Activated CD4-positive, alpha-beta T cell treated with anti-CD3 and anti-CD28 coated beads for 36 hours (primary cell): ENCODE measurements at regions of chr7 and their contacts with region 1.

Region 1: DNA sequence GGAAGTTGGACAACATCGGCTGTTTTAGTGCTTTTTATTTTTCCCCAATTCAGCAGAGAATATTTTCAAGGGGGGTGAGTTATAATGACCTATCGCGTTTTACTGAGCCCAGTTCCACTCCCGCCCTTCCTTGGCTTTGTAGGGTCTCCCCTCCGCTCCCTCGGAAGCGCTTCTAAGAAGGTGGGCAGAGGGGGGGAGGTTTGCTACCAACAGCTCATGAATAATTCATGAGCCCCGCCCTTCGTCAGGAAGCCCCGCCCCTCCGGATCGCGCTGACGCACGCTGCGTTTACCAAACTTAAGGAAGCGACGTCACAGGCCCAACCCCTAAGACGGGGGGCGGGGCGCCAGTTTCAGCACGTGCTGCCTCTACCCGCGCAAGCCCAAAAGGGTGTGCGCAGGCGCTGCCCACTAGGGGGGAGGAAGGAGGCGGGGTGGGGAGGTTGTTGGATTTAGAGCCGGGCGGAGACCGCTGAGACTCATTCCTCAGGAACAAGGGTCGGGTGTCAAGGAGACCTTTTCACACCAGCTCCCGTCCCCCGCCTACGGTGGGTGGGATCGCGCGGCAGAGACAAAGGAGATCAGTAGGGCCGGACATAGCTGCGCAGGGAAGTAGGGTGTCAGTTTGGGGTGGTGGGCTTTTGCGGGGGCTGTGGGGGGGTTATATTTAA is 529 bp upstream of the MEPCE start:
- DNase-seq: peak; percentile 100
- ATAC-seq: peak; percentile 70
- H3K4me3 Mint-ChIP-seq: peak overlapping the region; percentile 88
- H3K27ac Mint-ChIP-seq: peak overlapping the region; percentile 100
- H3K4me1 Mint-ChIP-seq: peaks cover 43% of the 10 kb centered on the region
- H3K27me3 Mint-ChIP-seq: no peaks in the 10 kb centered on the region

Region 2: GRCh38 chr7:99918959-99919813 is 509.9 kb before region 1 on chr7 and contains the start of gene TRIM4:
- CTCF ChIA-PET with region 1: no interaction called
- POLR2A ChIA-PET with region 1: no interaction called
- intact Hi-C with region 1: loop called in 1 of 2 experiments (anchors 1 kb)
- DNase-seq: peak; percentile 96
- ATAC-seq: peak; percentile 99
- H3K4me3 Mint-ChIP-seq: peak within 1 kb of the TSS; percentile 92
- H3K27ac Mint-ChIP-seq: peak within 1 kb of the TSS; percentile 95
- H3K4me1 Mint-ChIP-seq: peaks cover 33% of the 10 kb centered on the region
- H3K27me3 Mint-ChIP-seq: no peaks in the 10 kb centered on the region
- total RNA-seq, gene TRIM4: 23.9 to 25.7 TPM

Region 3: DNA sequence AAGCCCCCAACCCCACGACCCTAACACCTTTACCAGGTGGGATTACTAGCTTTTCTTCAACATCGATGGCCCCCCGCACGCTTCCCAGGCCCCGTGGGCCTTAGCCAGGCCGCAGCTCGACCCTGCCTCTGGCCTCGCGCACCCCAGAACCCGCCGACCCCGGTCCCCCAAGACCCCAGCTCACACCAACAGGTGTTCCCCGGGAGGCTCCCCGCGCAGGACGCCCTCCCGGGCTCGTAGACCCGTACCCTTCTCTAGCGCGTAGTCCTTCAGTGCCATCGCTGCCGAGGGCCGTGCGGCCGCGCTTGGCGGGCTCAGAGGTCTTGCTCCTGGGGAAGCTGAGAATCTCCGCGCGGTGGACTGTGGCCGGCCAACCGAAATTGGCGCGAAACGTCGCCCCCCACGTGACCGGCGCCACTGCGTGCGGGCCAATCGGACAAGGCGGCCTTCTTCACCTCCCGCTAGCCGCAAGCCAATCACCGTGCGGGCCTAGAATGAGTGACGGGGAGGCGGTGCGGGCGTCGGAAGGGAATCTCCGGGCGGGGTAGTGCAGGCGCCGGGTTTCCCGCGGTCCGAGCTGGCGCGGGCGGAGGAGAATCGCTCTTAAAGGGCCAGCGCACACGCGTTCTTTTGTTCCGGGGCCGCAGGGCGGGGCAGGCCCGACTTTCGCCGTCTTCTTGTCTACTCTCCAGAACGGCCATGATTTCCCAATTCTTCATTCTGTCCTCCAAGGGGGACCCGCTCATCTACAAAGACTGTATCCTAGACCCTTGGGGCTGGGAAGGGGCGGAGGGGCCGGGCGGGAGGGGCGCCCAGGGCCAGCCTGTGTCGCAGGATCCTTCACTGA is 327.9 kb before region 1 on chr7 and contains the starts of genes AP4M1 and MCM7:
- CTCF ChIA-PET with region 1: interaction called, 3 read pairs
- POLR2A ChIA-PET with region 1: interaction called, 8 read pairs
- intact Hi-C with region 1: loop called in 1 of 2 experiments (anchors 1 kb)
- DNase-seq: peak; percentile 99
- ATAC-seq: peak; percentile 91
- H3K4me3 Mint-ChIP-seq: peak within 1 kb of the TSS; percentile 90
- H3K27ac Mint-ChIP-seq: peak within 1 kb of the TSS; percentile 94
- H3K4me1 Mint-ChIP-seq: peaks cover 41% of the 10 kb centered on the region
- H3K27me3 Mint-ChIP-seq: no peaks in the 10 kb centered on the region
- total RNA-seq, gene AP4M1: 8.8 to 10.4 TPM
- total RNA-seq, gene MCM7: 411 to 429 TPM

Region 4: DNA sequence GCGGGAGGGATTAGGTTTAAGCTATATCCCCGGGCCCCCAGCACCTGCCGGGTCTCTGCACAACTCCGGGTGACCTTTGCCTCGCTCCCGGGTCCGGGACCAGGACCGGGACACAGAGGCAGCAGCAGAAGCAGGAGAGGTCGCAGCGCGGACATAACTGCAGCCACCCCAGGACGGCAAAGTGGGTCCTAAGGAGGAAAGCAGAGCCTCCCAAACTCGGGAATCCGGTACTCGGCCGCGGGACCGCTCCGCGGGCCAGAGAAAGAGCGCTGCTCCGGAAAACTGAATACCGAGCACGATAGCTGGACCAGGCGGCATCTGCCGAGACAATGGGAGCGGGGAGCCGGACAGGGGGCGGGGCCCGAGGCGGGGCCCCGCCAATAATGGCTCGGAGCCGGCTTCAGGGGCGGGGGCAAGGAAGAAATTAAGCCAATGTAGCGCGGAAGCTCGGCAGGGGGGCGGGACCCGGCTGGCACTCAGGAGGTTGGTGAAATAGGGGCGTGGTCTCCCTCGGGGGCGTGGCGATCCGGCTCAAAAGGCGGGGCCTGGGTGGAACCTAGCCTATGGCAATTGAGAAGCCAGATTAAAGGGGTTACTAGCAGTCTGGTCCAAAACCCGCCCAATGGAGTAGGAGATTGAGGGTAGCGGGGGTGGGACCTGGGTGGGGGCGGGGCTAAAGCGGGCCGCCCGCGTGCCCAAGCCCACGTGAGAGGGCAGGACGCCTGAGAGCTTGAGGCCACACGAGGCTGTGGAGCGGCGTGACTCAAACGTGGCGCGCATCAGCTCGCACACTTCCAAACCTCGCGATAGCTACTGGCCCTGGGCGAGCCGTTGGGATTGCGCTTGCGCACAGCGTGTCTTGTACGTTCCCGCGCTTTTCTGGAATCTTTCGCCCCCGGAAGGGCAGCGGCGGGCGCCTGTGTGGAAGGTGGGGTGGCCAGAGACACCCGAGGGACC is 251.8 kb before region 1 on chr7 and contains the starts of genes GPC2 and STAG3:
- CTCF ChIA-PET with region 1: no interaction called
- POLR2A ChIA-PET with region 1: interaction called, 4 read pairs
- intact Hi-C with region 1: loop called in 1 of 2 experiments (anchors 1 kb)
- DNase-seq: peak; percentile 99
- ATAC-seq: peak; percentile 89
- H3K4me3 Mint-ChIP-seq: peak within 1 kb of the TSS; percentile 76
- H3K27ac Mint-ChIP-seq: peak within 1 kb of the TSS; percentile 65
- H3K4me1 Mint-ChIP-seq: peaks cover 39% of the 10 kb centered on the region
- H3K27me3 Mint-ChIP-seq: peaks cover 3% of the 10 kb centered on the region
- total RNA-seq, gene GPC2: 5.3 to 6.1 TPM
- total RNA-seq, gene STAG3: 24.7 to 28.3 TPM

Region 5: GRCh38 chr7:100446040-100446439 is 16.9 kb after region 1 on chr7:
- CTCF ChIA-PET with region 1: interaction called, 3 read pairs
- POLR2A ChIA-PET with region 1: no interaction called
- intact Hi-C with region 1: loop called in 1 of 2 experiments (anchors 1 kb)
- DNase-seq: no peak
- ATAC-seq: no peak
- H3K4me3 Mint-ChIP-seq: no peak overlapping the region
- H3K27ac Mint-ChIP-seq: no peak overlapping the region
- H3K4me1 Mint-ChIP-seq: peaks cover 15% of the 10 kb centered on the region
- H3K27me3 Mint-ChIP-seq: no peaks in the 10 kb centered on the region

Region 6: DNA sequence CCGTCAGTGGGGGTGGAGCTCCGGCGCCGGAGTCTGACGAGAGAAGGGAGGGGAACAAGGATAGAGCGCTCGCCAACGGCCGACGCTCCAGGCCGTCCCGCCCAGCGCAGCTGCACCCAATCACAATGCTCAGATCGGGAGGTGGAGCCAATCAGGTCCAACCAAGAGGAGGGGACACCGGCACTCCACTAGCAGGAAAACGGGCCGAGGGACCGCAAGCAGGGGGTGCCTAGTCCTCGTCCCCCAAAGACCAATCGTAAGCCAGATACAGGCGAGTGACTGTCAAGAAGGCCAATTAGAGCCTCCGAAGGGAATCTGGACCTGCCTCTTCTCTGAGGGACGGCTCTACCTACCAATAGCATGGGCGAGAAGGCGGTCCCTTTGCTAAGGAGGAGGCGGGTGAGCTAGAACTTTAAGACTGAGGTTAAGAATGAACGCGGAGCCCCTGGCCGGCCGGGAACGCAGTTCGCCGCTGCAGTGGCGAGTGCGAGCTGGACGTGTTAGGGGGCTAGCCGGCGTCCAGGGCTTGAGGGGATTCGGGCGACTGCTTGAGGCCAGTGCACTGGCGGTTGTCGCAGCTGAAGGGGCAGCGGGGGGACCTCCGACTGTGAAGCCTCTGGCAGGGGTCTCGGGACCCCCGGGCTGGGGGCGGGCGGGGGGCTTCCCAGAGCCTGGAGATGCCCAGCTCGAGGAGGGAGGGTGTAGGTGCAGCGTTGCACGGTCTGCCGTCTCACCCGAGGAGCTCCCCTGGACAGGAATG is 157.3 kb after region 1 on chr7 and contains the start of gene FBXO24:
- CTCF ChIA-PET with region 1: interaction called, 3 read pairs
- POLR2A ChIA-PET with region 1: interaction called, 9 read pairs
- intact Hi-C with region 1: loop called in 1 of 2 experiments (anchors 1 kb)
- DNase-seq: peak; percentile 100
- ATAC-seq: peak; percentile 86
- H3K4me3 Mint-ChIP-seq: peak within 1 kb of the TSS; percentile 78
- H3K27ac Mint-ChIP-seq: peak within 1 kb of the TSS; percentile 82
- H3K4me1 Mint-ChIP-seq: peaks cover 26% of the 10 kb centered on the region
- H3K27me3 Mint-ChIP-seq: peaks cover 4% of the 10 kb centered on the region
- total RNA-seq, gene FBXO24: 1.4 to 2.1 TPM

Region 7: DNA sequence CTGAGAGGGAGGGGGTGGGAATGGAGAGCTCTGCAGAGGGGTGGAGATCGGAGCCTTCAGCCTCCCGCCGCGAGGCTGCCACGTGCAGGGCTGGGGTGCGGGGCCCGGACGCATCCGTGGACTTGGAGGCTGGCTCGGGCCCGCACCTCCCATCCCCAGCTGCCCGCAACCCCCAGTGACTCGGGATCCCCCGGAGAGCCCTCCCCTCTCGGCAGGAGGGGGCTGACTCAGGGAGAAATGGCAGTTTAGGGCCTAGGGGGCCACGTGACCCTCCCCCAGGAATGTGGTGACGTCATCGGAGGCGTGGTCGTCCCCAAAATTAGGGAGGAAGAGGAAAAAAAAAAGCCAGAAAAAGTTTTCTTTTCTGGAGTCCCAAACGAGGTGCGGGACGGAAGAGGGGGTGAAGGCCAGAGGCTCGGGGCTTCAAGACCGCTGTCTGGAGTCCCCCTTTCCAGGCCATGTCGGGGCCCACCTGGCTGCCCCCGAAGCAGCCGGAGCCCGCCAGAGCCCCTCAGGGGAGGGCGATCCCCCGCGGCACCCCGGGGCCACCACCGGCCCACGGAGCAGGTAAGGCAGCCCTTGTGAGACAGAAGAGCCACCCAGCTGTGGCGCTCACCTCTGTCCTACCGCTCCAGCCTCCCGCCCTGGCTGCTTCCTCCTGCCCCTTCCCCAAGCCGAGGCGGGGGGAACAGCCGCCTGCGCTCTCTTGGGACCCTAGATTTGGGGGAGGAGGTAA is 438.1 kb after region 1 on chr7 and contains the start of gene TRIP6:
- CTCF ChIA-PET with region 1: no interaction called
- POLR2A ChIA-PET with region 1: no interaction called
- intact Hi-C with region 1: loop called in 1 of 2 experiments (anchors 2 kb)
- DNase-seq: peak; percentile 84
- ATAC-seq: peak; percentile 68
- H3K4me3 Mint-ChIP-seq: peak within 1 kb of the TSS; percentile 90
- H3K27ac Mint-ChIP-seq: peak within 1 kb of the TSS; percentile 92
- H3K4me1 Mint-ChIP-seq: peaks cover 22% of the 10 kb centered on the region
- H3K27me3 Mint-ChIP-seq: no peaks in the 10 kb centered on the region
- total RNA-seq, gene TRIP6: 22.2 to 31.1 TPM

Region 8: DNA sequence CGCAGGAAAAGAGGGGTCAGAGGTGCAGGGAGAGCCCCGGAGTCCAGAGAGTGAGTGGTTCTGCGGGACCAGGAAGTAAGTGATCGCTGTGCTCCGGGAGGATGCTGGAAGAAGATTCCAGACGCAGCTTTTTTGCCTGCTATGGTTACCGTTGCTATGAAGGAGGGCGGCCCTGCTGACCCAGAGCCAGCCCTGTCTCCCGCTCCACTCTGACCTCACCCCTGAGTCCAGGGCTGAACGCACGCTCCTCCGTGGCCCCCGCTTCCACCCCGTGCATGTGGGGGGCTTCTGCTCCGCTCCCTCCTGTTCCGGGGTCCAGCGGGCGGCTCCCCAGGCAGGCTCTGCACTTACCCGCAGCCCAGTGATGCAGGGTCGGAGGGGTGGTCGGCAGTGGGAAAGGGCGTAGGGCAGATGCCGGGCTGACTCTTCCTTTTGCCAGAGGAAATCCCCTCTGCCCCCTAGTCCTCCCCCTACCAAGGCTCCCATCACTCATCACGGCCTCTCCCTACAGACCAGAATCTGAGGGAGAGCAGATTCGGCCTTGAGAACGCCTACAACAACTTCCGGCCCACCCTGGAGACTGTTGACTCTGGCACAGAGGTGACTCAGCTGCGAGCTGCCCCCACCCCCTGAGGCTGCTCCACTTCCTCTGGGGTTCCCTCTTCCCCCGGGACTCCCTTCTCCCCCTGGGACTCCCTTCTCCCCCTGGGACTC is 588.1 kb after region 1 on chr7:
- CTCF ChIA-PET with region 1: no interaction called
- POLR2A ChIA-PET with region 1: no interaction called
- intact Hi-C with region 1: no loop called
- DNase-seq: peak; percentile 84
- ATAC-seq: peak; percentile 97
- H3K4me3 Mint-ChIP-seq: peak overlapping the region; percentile 72
- H3K27ac Mint-ChIP-seq: peak overlapping the region; percentile 72
- H3K4me1 Mint-ChIP-seq: peaks cover 22% of the 10 kb centered on the region
- H3K27me3 Mint-ChIP-seq: peaks cover 14% of the 10 kb centered on the region